BJ (cell line): ENCODE measurements at regions of chr4 and their contacts with region 1.

Region 1: GRCh38 chr4:8140915-8141314 is 17.7 kb downstream of the ABLIM2 start:
- DNase-seq: no peak
- H3K4me3 ChIP-seq: no peak overlapping the region
- H3K27me3 ChIP-seq: peaks cover 28% of the 10 kb centered on the region
- CTCF ChIP-seq: no peak

Region 2: DNA sequence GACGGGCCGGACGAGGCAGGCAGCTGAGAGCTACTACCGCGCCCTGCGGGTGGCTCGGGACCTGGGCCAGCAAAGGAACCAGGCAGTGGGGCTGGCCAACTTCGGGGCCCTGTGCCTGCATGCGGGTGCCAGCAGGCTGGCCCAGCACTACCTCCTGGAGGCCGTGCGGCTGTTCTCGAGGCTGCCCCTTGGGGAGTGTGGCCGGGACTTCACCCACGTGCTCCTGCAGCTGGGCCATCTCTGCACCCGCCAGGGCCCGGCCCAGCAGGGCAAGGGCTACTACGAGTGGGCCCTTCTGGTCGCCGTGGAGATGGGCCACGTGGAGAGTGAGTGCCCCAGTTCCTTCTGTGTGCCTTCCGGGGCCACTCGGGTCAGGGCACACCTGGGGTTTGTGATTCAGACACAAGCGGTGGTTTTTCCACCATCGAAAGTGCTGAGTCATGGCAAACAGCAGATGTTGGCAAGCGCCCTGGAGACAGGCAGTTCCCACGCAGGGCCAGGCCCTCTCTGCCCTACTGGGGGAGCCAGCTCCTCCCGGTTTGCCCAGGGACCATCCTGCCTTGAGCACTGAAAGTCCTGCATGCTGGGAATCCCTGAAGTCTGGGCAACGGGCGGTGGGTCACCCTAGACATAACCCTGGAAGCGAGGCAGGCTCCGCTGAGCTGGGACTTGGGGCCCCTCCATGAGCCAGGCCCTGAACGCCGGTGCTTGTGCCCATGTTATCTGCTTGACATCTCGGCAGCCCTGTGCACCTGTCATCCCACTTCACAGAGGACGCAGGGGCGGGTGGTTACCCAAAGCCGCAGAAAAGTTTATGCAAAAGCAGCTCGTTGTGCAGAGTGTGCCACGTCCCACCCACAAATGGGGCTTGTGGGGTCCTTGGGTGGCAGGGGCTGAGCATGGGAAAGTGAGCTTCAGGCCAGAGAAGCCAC is 87.7 kb after region 1 on chr4:
- CTCF ChIA-PET with region 1: no interaction called
- POLR2A ChIA-PET with region 1: interaction called, 10 read pairs
- DNase-seq: peak; percentile 39
- H3K4me3 ChIP-seq: no peak overlapping the region
- H3K27me3 ChIP-seq: peaks cover 1% of the 10 kb centered on the region; the same call in 1 of the 2 replicates
- CTCF ChIP-seq: no peak